Calu3 (cell line): ENCODE measurements at regions of chr12 and their contacts with region 1.

Region 1: DNA sequence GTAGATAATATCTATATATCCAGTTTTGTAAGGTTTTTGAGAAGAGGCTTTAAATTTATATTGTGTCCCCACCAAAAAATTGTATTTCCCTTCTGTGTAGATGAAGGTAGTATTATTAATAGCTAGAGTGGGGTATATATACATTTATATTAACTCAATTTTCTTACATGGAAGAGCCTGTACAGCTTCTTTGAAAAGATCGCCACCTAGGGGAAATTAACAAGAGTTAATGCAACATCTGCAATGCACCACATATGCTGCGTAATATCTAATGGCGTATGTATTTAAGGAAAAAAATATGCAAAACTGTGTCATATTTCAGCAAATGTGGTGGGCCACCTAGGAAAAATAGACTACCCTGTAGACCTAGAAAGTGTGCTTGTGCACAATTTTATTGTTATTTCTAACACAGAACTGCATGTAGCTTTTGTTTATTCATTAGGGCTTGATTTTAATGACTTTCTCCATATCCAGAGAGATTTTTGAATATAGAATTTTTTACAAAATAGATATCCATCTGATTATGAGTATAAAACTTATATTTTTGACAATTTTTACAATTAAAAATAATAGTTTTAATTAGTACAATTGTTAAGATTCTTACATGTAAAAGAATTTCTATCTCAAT is 14.0 kb downstream of the CCER1 start:
- DNase-seq: no peak
- H3K4me3 Mint-ChIP-seq: no peak overlapping the region
- H3K27ac Mint-ChIP-seq: no peak overlapping the region
- H3K4me1 Mint-ChIP-seq: peaks cover 25% of the 10 kb centered on the region
- H3K27me3 Mint-ChIP-seq: no peaks in the 10 kb centered on the region
- CTCF ChIP-seq: peak; percentile 79

Region 2: DNA sequence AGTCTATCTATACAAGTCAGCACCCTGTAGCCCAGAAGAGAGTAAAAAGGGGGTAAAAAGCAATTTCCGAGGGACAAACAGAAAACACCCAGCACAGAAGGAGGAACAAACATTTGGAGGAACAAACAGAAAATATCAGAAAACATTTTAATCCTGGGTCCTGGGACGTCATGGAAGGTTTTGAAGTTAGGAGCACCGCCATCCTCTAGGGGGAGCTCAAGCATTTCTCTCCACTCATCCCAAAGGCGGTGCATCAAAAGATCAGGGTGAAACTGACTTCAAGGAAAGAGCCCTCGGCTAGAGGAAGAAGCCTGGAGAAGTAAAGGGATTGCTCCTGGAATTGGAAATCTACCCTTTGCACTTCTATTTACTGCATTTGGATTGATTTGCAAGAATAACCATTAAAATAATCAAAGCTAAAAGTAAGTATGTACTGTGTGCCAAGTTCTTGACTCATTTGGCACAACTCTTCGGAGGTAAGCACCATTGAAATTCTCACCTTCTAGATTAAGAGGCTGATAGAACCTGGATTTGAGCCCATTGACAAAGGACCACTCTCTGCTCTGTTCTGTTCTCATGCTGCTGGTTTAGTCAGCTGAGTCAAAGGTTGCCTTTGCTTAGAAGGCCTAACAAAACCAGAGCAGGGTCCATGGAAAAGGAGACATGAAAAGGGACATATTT is 1397.9 kb before region 1 on chr12:
- CTCF ChIA-PET with region 1: no interaction called
- intact Hi-C with region 1: loop called (anchors 1 kb)
- DNase-seq: peak; percentile 84
- H3K4me3 Mint-ChIP-seq: no peak overlapping the region
- H3K27ac Mint-ChIP-seq: peak overlapping the region; percentile 14
- H3K4me1 Mint-ChIP-seq: peaks cover 26% of the 10 kb centered on the region
- H3K27me3 Mint-ChIP-seq: no peaks in the 10 kb centered on the region
- CTCF ChIP-seq: peak; percentile 94

Region 3: GRCh38 chr12:90181216-90181615 is 759.8 kb before region 1 on chr12:
- CTCF ChIA-PET with region 1: no interaction called
- intact Hi-C with region 1: loop called (anchors 10 kb)
- DNase-seq: no peak
- H3K4me3 Mint-ChIP-seq: no peak overlapping the region
- H3K27ac Mint-ChIP-seq: no peak overlapping the region
- H3K4me1 Mint-ChIP-seq: no peaks in the 10 kb centered on the region
- H3K27me3 Mint-ChIP-seq: no peaks in the 10 kb centered on the region
- CTCF ChIP-seq: no peak

Region 4: DNA sequence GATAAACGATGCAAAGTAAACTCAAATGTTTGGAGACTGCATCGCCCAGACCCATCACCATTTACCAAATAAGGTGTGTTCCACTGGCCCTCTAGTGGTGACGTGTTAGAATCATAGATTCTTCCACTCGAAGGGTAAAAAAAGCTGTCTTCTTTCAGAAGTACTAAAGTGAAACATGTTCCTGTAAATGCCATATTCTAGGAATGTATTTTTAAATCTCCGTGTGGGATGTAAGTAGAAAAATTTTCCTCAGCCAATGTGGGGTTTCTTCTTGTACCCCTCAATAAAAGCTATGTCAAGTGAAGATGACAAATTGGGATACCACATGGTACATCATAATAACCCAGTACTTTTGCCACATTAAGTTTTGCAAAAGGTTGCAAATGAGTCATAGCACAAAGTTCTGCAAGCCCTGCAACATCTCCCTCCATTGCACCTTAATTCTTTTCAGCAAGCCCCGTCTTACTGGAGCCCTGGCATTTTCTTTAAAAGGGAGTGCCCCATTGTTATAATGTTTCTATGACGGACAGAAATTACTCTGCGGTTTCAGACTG is 86.8 kb before region 1 on chr12:
- CTCF ChIA-PET with region 1: no interaction called
- intact Hi-C with region 1: loop called (anchors 5 kb)
- DNase-seq: peak; percentile 39
- H3K4me3 Mint-ChIP-seq: no peak overlapping the region
- H3K27ac Mint-ChIP-seq: no peak overlapping the region
- H3K4me1 Mint-ChIP-seq: peaks cover 24% of the 10 kb centered on the region
- H3K27me3 Mint-ChIP-seq: no peaks in the 10 kb centered on the region
- CTCF ChIP-seq: peak; percentile 75

Region 5: GRCh38 chr12:90959538-90960139 is 18.7 kb after region 1 on chr12:
- CTCF ChIA-PET with region 1: interaction called, 17 read pairs
- intact Hi-C with region 1: loop called (anchors 1 kb)
- DNase-seq: peak; percentile 38
- H3K4me3 Mint-ChIP-seq: no peak overlapping the region
- H3K27ac Mint-ChIP-seq: no peak overlapping the region
- H3K4me1 Mint-ChIP-seq: no peaks in the 10 kb centered on the region
- H3K27me3 Mint-ChIP-seq: no peaks in the 10 kb centered on the region
- CTCF ChIP-seq: peak; percentile 65